ENCODE measurements at regions of chr21 and their contacts with region 1.

Region 1: GRCh38 chr21:41816220-41817165 is 49.6 kb upstream of the RIPK4 start:
- DNase-seq: peak; percentile 55
- H3K4me3 ChIP-seq: no peak overlapping the region
- H3K27ac ChIP-seq: peak overlapping the region in 1 of 2 donors; percentile 7
- H3K4me1 ChIP-seq: no peaks in the 10 kb centered on the region
- H3K27me3 ChIP-seq: no peaks in the 10 kb centered on the region
- CTCF ChIP-seq: peak; percentile 43 to 84 (median 78)
- POLR2A ChIP-seq: no peak

Region 2: GRCh38 chr21:41861987-41862386 is 45.5 kb after region 1 on chr21:
- intact Hi-C with region 1: no loop called
- DNase-seq: no peak
- H3K4me3 ChIP-seq: no peak overlapping the region
- H3K27ac ChIP-seq: no peak overlapping the region
- H3K4me1 ChIP-seq: no peaks in the 10 kb centered on the region
- H3K27me3 ChIP-seq: no peaks in the 10 kb centered on the region
- CTCF ChIP-seq: no peak
- POLR2A ChIP-seq: no peak

Region 3: DNA sequence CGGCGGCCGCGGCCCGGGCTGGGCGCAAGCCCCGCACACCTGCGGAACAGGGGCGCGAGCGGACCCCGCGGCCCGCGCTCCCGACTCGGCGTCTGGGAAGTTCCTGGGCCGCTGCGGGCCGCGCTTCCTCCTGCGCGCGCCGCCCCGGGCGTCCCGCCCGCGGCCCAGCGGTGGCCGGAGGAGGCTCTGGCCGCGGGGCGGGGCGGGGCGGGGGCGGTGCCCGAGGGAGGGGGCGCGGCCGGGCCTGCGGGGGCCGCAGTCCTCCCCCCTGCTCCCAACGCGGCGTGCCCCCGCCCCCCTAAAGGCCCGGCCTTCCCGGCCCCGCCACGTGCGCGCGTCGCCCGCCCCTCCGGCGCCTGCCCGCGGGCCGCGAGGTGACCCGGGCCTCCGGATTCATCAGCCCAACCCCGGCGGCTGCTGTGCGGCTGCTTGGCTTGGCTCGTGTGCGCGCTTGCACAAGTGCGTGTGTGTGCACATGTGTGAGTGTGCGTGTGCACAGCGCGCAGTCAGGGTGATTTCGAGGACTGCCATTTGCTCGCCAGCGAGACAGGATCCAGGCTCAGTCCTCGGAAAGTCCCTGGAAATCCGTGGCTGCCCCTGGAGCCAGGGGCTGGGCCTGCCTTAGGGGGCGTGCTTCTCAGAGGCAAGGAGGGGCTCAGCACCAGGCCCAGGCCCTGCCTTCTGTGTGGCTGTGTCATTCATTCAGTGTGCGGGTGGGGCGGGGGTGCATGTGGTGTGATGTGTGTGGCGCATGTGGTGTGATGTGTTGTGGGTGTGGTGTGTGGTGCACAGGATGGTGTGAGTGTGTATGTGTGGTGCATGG is 137.5 kb after region 1 on chr21 and contains the start of gene C2CD2:
- intact Hi-C with region 1: loop called (anchors 5 kb)
- DNase-seq: no peak
- H3K4me3 ChIP-seq: peak within 1 kb of the TSS; percentile 87 to 89
- H3K27ac ChIP-seq: peak within 1 kb of the TSS; percentile 78 to 79
- H3K4me1 ChIP-seq: peaks cover 14% of the 10 kb centered on the region
- H3K27me3 ChIP-seq: no peaks in the 10 kb centered on the region
- CTCF ChIP-seq: no peak
- POLR2A ChIP-seq: no peak
- total RNA-seq, gene C2CD2: 27.3 to 30.5 TPM

Region 4: DNA sequence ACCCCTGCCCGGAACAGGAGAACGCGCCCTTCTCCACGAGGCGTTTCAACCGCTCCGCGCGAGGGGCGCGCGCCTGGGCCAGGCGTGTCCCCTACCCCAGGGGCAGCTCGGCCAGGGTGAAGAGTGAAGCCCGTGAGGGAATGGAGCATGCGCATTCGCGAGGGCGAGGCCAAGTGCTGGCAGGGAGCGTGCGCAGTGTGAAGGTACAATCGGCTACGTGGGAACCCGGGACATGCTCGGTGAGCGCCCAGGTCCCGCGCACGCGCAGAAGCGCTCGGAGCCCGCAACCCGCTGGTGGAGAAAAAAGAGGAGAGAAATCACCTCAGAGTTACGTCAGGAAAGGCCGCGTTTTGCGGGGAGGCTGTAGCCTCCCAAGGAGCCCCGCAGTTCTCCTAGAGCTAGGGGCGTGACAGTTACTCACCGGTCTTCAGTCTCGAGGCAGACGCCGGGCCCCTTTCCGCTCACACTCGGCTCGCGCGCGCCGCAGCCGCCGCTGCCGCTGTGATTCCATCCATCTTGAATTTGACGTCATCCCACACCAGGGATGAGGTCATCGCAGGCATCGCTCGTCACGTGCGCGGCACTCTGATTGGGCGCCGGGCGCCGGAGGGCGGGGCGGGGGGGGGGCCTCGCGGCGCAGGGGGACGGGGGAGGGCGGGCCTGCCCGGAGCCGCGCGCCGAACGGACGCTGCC is 193.5 kb after region 1 on chr21 and contains the start of gene ZBTB21:
- intact Hi-C with region 1: loop called (anchors 5 kb)
- DNase-seq: peak; percentile 98
- H3K4me3 ChIP-seq: peak within 1 kb of the TSS; percentile 80 to 83
- H3K27ac ChIP-seq: peak within 1 kb of the TSS; percentile 96 to 100
- H3K4me1 ChIP-seq: no peaks in the 10 kb centered on the region
- H3K27me3 ChIP-seq: no peaks in the 10 kb centered on the region
- CTCF ChIP-seq: peak in 1 of 4 experiments; percentile 20
- POLR2A ChIP-seq: peak; percentile 98
- total RNA-seq, gene ZBTB21: 12.3 to 13.6 TPM

Region 5: DNA sequence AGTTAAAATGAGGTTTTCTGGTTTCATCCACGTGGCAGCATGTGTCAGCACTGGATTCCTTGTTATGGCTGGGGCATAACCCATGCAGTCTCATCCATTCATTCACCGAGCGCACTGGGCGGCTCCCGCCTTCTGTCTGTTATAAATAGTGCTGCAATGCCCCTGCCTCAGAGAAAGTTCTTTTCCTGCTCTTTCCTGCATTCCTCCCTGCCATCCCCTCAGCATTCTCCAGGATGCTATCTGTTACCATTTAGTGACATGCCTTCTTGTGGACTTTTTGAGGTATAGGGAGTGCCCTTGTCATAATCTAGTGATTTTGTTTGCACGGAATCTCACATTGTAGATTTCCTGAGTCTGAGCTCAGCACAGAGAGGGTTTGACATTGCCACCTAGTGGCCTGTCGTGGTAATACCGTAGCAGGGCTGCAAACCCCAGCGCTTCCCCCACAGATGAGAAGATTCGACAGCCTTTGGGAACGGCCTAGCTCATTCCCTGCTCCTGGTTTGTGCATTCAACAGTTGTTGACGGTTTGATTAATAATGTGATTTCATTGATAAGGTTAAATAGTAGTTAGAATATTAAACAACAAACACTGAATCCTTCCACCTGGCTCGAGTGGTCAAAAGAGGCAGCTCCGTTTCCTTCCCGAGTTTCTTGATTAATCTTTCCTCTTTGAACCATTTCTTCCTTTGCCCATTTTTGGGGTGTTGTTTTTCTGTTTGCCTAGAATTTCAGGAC is 300.9 kb after region 1 on chr21:
- intact Hi-C with region 1: loop called (anchors 2 kb)
- DNase-seq: peak; percentile 68
- H3K4me3 ChIP-seq: no peak overlapping the region
- H3K27ac ChIP-seq: no peak overlapping the region
- H3K4me1 ChIP-seq: peaks cover 5% of the 10 kb centered on the region
- H3K27me3 ChIP-seq: no peaks in the 10 kb centered on the region
- CTCF ChIP-seq: peak; percentile 90 to 95 (median 94)
- POLR2A ChIP-seq: no peak